Ovary (tissue), 10 donors: ENCODE measurements at regions of chr3 and their contacts with region 1.

Region 1: DNA sequence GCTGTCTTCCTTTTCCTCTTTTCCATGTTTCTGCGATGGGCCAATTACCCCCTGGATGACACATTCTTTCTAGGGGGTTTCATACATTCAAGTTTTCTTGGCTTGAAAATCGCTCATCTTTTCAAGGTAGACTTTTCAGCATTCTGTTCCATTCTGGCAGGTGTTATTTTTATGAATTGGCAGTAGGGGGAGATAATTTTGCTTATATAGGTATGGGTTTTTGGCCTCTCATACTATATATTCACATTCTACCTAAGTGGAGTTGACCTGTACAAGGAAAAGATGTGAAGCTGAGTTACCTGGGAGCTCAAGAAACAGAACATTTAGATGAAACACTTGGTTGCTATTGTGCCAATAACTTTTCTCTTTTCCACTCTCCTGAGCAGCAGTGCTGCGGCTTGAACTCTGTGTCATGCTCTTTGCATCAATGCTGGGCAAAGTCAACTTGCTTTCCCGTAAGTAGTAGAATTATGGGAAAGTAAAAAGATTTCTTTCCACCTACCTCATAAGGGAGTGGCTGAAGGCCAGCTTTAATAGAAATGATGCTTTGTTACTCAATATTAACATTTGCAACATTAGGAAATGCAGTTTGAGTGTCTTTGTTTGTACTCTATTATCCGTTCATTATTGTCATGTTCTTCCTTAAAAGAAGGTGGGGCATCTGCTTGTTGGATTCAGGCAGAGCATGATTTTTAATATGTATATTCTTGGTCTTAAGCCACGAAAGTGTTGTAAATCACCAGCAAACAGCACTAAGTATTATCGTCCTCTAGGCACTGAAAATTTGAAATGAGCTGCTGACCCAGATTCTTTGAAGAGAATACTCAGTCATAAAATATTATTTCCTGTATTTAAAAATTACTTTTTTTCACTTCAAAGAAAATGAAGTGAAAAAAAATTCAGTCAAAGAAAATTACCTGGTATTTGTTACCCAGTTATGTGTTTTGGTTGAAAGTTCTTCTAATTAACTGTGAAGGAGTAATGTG is 27.7 kb upstream of the MFSD1 start:
- DNase-seq: no peak
- H3K4me3 ChIP-seq: no peak overlapping the region
- H3K27ac ChIP-seq: no peak overlapping the region
- H3K4me1 ChIP-seq: peaks cover 10% of the 10 kb centered on the region
- H3K27me3 ChIP-seq: no peaks in the 10 kb centered on the region
- CTCF ChIP-seq: no peak
- EP300 ChIP-seq: peak; percentile 80
- POLR2A ChIP-seq: no peak

Region 2: DNA sequence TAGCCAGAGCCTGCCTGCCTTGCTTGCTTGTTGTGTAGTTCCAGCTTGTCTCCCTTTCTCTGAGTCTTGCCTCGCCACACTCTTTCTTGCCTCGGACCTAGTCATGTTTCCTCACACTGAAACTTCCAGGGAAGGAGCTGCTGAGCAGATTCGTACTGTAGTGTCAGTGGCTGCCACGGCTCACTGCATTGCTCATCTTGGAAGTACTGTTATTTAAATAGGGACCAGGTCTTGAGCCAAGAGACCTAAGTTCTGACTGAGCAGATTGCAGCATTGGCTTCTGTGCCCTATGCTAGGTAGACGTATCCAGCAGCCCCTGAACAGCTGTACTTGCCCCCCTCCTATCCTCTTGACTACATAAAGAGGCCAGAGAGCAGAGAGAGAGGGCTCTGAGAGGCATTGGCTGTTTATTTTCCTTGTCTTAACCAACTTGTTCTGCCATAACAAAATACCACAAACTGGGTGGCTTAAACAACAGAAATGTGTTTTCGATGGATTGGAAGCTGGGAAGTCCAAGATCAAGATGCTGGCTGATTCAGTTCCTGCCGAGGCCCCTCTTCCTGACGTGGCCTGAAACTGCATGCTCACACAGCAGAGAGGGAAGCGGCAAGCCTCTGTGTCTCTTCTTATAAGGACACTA is 36.0 kb before region 1 on chr3:
- intact Hi-C with region 1: loop called in 2 of 4 experiments (anchors 5 kb)
- DNase-seq: no peak
- H3K4me3 ChIP-seq: no peak overlapping the region
- H3K27ac ChIP-seq: no peak overlapping the region
- H3K4me1 ChIP-seq: no peaks in the 10 kb centered on the region
- H3K27me3 ChIP-seq: no peaks in the 10 kb centered on the region
- CTCF ChIP-seq: no peak
- EP300 ChIP-seq: no peak
- POLR2A ChIP-seq: no peak

Region 3: GRCh38 chr3:160278210-160278609 is 1504.1 kb after region 1 on chr3:
- intact Hi-C with region 1: no loop called
- DNase-seq: no peak
- H3K4me3 ChIP-seq: no peak overlapping the region
- H3K27ac ChIP-seq: no peak overlapping the region
- H3K4me1 ChIP-seq: no peaks in the 10 kb centered on the region
- H3K27me3 ChIP-seq: no peaks in the 10 kb centered on the region
- CTCF ChIP-seq: no peak
- EP300 ChIP-seq: no peak
- POLR2A ChIP-seq: no peak